Naive thymus-derived CD4-positive, alpha-beta T cell (primary cell): ENCODE measurements at regions of chr19 and their contacts with region 1.

Region 1: GRCh38 chr19:9818734-9819589 is at the start of gene FBXL12:
- DNase-seq: peak; percentile 99 to 100 (median 100)
- ATAC-seq: peak; percentile 93
- H3K4me3 ChIP-seq: peak within 1 kb of the TSS; percentile 100
- H3K4me3 Mint-ChIP-seq: peak within 1 kb of the TSS; percentile 81 to 96 (median 90)
- H3K27ac ChIP-seq: peak within 1 kb of the TSS; percentile 99
- H3K27ac Mint-ChIP-seq: peak within 1 kb of the TSS; percentile 78 to 97 (median 90)
- H3K4me1 ChIP-seq: peaks cover 9 to 14% of the 10 kb centered on the region in 2 donors
- H3K4me1 Mint-ChIP-seq: peaks cover 19 to 43% (median 30%) of the 10 kb centered on the region in 7 donors
- H3K27me3 ChIP-seq: no peaks in the 10 kb centered on the region
- H3K27me3 Mint-ChIP-seq: no peaks in the 10 kb centered on the region
- total RNA-seq, gene FBXL12: 16.8 to 36.2 (median 34.0) TPM

Region 2: GRCh38 chr19:9309139-9309973 is 509.6 kb before region 1 on chr19 and contains the start of gene ZNF699:
- CTCF ChIA-PET with region 1: no interaction called
- POLR2A ChIA-PET with region 1: no interaction called
- intact Hi-C with region 1: loop called in 1 of 2 experiments (anchors 2 kb)
- DNase-seq: peak; percentile 94 to 100 (median 97)
- ATAC-seq: peak; percentile 94
- H3K4me3 ChIP-seq: peak within 1 kb of the TSS; percentile 95
- H3K4me3 Mint-ChIP-seq: peak within 1 kb of the TSS; percentile 89 to 98 (median 96)
- H3K27ac ChIP-seq: peak within 1 kb of the TSS; percentile 98
- H3K27ac Mint-ChIP-seq: peak within 1 kb of the TSS; percentile 89 to 99 (median 97)
- H3K4me1 ChIP-seq: peaks cover 6 to 15% of the 10 kb centered on the region in 2 donors
- H3K4me1 Mint-ChIP-seq: peaks cover 4 to 37% (median 24%) of the 10 kb centered on the region in 7 donors
- H3K27me3 ChIP-seq: no peaks in the 10 kb centered on the region
- H3K27me3 Mint-ChIP-seq: peaks cover 0 to 2% (median 0%) of the 10 kb centered on the region in 5 donors
- total RNA-seq, gene ZNF699: 9.1 to 19.1 (median 15.5) TPM

Region 3: DNA sequence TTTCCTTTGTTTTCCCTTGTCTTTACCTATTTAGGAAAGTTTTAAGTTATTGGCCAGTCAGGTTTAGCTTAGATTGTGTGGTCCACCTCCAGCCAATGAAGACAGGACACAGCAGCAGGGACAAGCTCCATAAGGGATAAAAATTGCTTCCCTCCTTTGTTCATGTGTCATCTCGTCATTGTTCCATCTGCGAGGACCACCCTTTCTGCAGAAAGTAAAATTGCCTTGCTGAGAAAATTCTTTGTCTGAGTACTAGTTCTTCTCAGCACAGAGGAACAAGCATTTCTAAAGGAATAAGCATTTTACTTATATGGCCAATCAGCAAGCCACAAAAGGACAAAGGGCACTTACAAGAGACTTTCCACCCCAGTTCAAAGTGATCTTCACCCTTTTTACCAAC is 331.9 kb before region 1 on chr19:
- CTCF ChIA-PET with region 1: no interaction called
- POLR2A ChIA-PET with region 1: no interaction called
- intact Hi-C with region 1: no loop called
- DNase-seq: no peak
- ATAC-seq: no peak
- H3K4me3 ChIP-seq: no peak overlapping the region
- H3K4me3 Mint-ChIP-seq: no peak overlapping the region
- H3K27ac ChIP-seq: no peak overlapping the region
- H3K27ac Mint-ChIP-seq: no peak overlapping the region
- H3K4me1 ChIP-seq: no peaks in the 10 kb centered on the region
- H3K4me1 Mint-ChIP-seq: no peaks in the 10 kb centered on the region
- H3K27me3 ChIP-seq: no peaks in the 10 kb centered on the region
- H3K27me3 Mint-ChIP-seq: peaks cover 0 to 4% (median 0%) of the 10 kb centered on the region in 5 donors

Region 4: DNA sequence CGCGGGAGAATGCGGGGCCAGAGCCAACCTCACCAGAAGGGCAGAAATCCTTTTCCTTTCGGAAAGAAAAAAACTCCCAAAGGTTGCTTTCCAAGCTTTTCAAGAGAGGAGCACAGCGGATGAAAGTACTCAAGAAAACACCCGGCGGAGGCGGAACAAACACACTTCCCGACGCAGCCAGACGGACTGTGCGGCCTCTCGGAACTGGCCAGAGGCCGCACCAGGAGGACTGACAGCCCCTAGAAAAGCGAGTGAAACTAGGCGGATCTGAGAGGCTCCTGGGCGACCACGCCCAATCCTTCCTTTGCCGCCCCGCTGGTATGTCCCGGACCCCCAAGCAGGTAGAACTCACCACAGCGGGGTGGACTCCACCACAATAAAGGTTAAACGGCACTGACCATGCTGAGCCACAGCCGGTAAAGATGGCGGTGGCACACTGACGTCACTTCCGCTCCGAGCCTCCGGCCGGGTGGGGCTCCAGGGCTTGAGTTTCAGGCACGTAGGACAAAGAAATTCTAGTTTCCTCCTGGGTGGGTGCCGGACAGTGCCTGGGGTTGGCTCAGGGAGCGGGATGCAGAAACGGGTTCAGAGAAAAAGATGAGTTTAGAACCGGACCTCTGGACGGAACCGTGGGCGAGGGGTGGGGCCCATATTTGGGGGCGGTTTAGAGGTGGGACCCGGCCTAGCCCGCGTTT is 144.2 kb before region 1 on chr19 and contains the start of gene ZNF562:
- CTCF ChIA-PET with region 1: no interaction called
- POLR2A ChIA-PET with region 1: no interaction called
- intact Hi-C with region 1: loop called in 1 of 2 experiments (anchors 1 kb)
- DNase-seq: peak; percentile 66 to 82 (median 76)
- ATAC-seq: peak; percentile 92
- H3K4me3 ChIP-seq: peak within 1 kb of the TSS; percentile 99
- H3K4me3 Mint-ChIP-seq: peak within 1 kb of the TSS; percentile 86 to 99 (median 96)
- H3K27ac ChIP-seq: peak within 1 kb of the TSS; percentile 91
- H3K27ac Mint-ChIP-seq: peak within 1 kb of the TSS; percentile 87 to 99 (median 96)
- H3K4me1 ChIP-seq: peaks cover 0 to 4% of the 10 kb centered on the region in 2 donors
- H3K4me1 Mint-ChIP-seq: peaks cover 11 to 33% (median 29%) of the 10 kb centered on the region in 7 donors
- H3K27me3 ChIP-seq: no peaks in the 10 kb centered on the region
- H3K27me3 Mint-ChIP-seq: no peaks in the 10 kb centered on the region
- total RNA-seq, gene ZNF562: 8.9 to 18.6 (median 16.5) TPM

Region 5: DNA sequence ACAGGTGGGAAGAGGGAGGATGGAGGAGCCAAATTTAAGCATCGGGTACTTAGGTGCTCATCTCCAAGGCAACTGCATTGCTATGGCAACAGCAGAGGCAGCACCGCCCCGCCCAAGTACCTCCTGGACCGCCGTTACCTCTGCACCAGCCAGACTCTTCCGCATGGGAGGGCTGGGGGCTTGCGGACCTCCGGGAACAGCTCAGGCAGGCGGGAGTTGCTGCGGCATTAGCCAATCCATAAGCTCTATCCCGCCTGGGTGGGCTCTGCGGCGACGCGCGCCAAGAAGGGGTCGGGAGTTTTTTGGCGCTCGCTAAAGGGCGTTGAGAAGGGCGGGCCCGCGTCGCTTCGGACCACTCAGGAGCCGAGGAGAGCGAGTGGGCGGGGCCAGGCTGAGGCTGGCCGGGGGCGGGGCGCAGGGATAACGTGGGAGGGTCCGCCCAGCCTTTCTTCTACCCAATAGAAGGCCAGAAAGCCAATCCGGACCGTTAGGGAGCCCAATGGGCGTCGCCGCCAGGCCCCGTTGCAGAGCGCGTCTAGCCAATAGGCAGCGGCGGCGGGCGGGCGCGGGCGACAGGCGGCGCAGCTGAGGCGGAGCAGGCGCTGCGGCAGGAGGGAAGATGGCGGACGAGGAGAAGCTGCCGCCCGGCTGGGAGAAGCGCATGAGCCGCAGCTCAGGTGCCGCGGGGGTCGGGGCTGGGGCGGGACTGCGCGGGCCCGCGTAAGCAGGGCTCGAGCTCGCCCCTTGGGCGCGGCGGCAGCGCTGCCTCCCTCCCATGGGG is 16.0 kb after region 1 on chr19 and contains the start of gene PIN1:
- CTCF ChIA-PET with region 1: no interaction called
- POLR2A ChIA-PET with region 1: interaction called, 3 read pairs
- intact Hi-C with region 1: loop called (anchors 1 kb)
- DNase-seq: peak; percentile 98 to 100 (median 99)
- ATAC-seq: peak; percentile 98
- H3K4me3 ChIP-seq: peak within 1 kb of the TSS; percentile 92
- H3K4me3 Mint-ChIP-seq: peak within 1 kb of the TSS; percentile 83 to 97 (median 95)
- H3K27ac ChIP-seq: peak within 1 kb of the TSS; percentile 71
- H3K27ac Mint-ChIP-seq: peak within 1 kb of the TSS; percentile 82 to 99 (median 94)
- H3K4me1 ChIP-seq: peaks cover 10 to 11% of the 10 kb centered on the region in 2 donors
- H3K4me1 Mint-ChIP-seq: peaks cover 16 to 32% (median 20%) of the 10 kb centered on the region in 7 donors
- H3K27me3 ChIP-seq: no peaks in the 10 kb centered on the region
- H3K27me3 Mint-ChIP-seq: no peaks in the 10 kb centered on the region
- total RNA-seq, gene PIN1: 41.4 to 93.2 (median 61.1) TPM

Region 6: GRCh38 chr19:9847087-9847671 is 28.2 kb after region 1 on chr19:
- CTCF ChIA-PET with region 1: no interaction called
- POLR2A ChIA-PET with region 1: no interaction called
- intact Hi-C with region 1: no loop called
- DNase-seq: no peak
- ATAC-seq: peak; percentile 47
- H3K4me3 ChIP-seq: no peak overlapping the region
- H3K4me3 Mint-ChIP-seq: peak overlapping the region in 1 of 10 donors; percentile 56
- H3K27ac ChIP-seq: no peak overlapping the region
- H3K27ac Mint-ChIP-seq: peak overlapping the region in 3 of 9 donors; percentile 65 to 73 (median 70)
- H3K4me1 ChIP-seq: no peaks in the 10 kb centered on the region
- H3K4me1 Mint-ChIP-seq: peaks cover 3 to 49% (median 25%) of the 10 kb centered on the region in 7 donors
- H3K27me3 ChIP-seq: no peaks in the 10 kb centered on the region
- H3K27me3 Mint-ChIP-seq: no peaks in the 10 kb centered on the region

Region 7: GRCh38 chr19:10565567-10566407 is 746.8 kb after region 1 on chr19 and contains the start of gene KRI1:
- CTCF ChIA-PET with region 1: no interaction called
- POLR2A ChIA-PET with region 1: no interaction called
- intact Hi-C with region 1: loop called in 1 of 2 experiments (anchors 5 kb)
- DNase-seq: peak; percentile 97 to 100 (median 99)
- ATAC-seq: peak; percentile 75
- H3K4me3 ChIP-seq: peak within 1 kb of the TSS; percentile 84
- H3K4me3 Mint-ChIP-seq: peak within 1 kb of the TSS; percentile 92 to 100 (median 97)
- H3K27ac ChIP-seq: peak within 1 kb of the TSS; percentile 92
- H3K27ac Mint-ChIP-seq: peak within 1 kb of the TSS; percentile 94 to 99 (median 96)
- H3K4me1 ChIP-seq: peaks cover 26 to 28% of the 10 kb centered on the region in 2 donors
- H3K4me1 Mint-ChIP-seq: peaks cover 28 to 56% (median 45%) of the 10 kb centered on the region in 7 donors
- H3K27me3 ChIP-seq: no peaks in the 10 kb centered on the region
- H3K27me3 Mint-ChIP-seq: peaks cover 0 to 5% (median 0%) of the 10 kb centered on the region in 5 donors
- total RNA-seq, gene KRI1: 48.4 to 84.1 (median 60.4) TPM

Region 8: GRCh38 chr19:11346092-11346940 is 1527.4 kb after region 1 on chr19 and contains the starts of genes CCDC159 and TMEM205:
- CTCF ChIA-PET with region 1: no interaction called
- POLR2A ChIA-PET with region 1: no interaction called
- intact Hi-C with region 1: loop called in 1 of 2 experiments (anchors 1 kb)
- DNase-seq: peak; percentile 82 to 99 (median 98)
- ATAC-seq: peak; percentile 98
- H3K4me3 ChIP-seq: peak within 1 kb of the TSS; percentile 75
- H3K4me3 Mint-ChIP-seq: peak within 1 kb of the TSS; percentile 92 to 100 (median 98)
- H3K27ac ChIP-seq: peak within 1 kb of the TSS; percentile 83
- H3K27ac Mint-ChIP-seq: peak within 1 kb of the TSS; percentile 89 to 98 (median 96)
- H3K4me1 ChIP-seq: peaks cover 13 to 14% of the 10 kb centered on the region in 2 donors
- H3K4me1 Mint-ChIP-seq: peaks cover 22 to 39% (median 29%) of the 10 kb centered on the region in 7 donors
- H3K27me3 ChIP-seq: no peaks in the 10 kb centered on the region
- H3K27me3 Mint-ChIP-seq: no peaks in the 10 kb centered on the region
- total RNA-seq, gene CCDC159: 17.6 to 87.4 (median 84.3) TPM
- total RNA-seq, gene TMEM205: 19.5 to 36.7 (median 29.5) TPM